ENCODE measurements at regions of chr16 and their contacts with region 1.

Region 1: DNA sequence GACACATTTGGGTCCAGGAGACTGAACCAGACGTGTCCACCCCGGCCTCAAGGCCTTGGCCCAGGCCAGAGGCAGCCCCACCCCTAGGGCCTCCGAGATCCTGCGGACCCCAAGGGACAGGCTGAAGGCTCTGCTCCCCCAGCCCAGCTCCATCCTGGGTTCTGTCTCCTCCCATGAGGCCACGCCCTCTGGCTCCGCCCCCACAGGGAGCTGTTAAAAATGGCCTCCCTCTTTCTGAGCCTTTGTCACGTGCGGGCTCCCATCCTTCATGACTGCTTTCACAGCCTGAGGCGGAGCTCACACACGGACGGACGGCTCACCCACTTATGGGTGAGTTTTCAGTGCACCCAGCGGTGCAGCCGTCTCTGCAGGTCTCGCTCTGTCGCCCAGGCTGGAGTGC is 6.5 kb upstream of the CACNA1H start:
- DNase-seq: peak in 3 of 5 donors; percentile 57 to 78 (median 59)
- H3K4me3 ChIP-seq: no peak overlapping the region
- H3K27ac ChIP-seq: peak overlapping the region; percentile 11 to 46
- H3K4me1 ChIP-seq: peaks cover 6% of the 10 kb centered on the region
- H3K27me3 ChIP-seq: no peaks in the 10 kb centered on the region
- CTCF ChIP-seq: no peak
- EP300 ChIP-seq: no peak
- POLR2A ChIP-seq: no peak

Region 2: DNA sequence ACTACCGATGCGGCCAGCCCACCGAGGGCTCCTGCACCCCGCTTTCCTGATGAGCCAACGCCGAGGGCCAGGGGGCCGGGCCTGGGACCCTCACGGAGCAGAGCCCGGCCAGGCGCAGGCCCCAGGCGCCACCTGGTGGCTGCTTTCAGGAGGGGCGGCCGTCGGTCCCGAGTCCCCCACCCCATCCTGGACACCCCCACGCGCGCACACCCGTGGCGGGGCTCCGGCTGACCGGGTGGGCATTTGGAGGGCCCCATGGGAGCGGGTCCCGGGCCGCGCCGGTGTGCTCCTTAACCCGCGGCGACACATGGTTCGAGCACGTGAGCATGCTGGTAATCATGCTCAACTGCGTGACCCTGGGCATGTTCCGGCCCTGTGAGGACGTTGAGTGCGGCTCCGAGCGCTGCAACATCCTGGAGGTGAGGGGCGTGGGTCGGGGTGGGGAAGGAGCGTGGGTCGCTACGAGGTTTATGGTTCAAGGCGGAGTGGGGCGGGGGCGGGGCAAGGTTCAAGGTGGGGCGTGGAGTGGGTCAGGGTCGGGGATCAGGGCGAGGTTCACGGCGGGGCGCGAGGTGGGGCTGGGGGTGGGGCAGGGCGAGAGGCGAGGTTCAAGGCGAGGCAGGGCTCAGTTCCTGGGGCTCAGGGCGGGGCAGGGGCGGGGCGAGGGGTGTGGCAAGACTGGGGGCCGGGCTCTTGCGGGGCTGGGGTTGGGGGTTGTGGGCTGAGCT is 48.4 kb after region 1 on chr16:
- intact Hi-C with region 1: loop called in 1 of 4 experiments (anchors 5 kb)
- DNase-seq: peak in 1 of 5 donors; percentile 68
- H3K4me3 ChIP-seq: no peak overlapping the region
- H3K27ac ChIP-seq: peak overlapping the region in 1 of 2 donors; percentile 53
- H3K4me1 ChIP-seq: peaks cover 2% of the 10 kb centered on the region
- H3K27me3 ChIP-seq: no peaks in the 10 kb centered on the region
- CTCF ChIP-seq: peak; percentile 84 to 96 (median 92)
- EP300 ChIP-seq: no peak
- POLR2A ChIP-seq: peak; percentile 11